ENCODE measurements at regions of chr6 and their contacts with region 1.

Region 1: GRCh38 chr6:135128268-135128914 is 52.7 kb upstream of the MYB start:
- DNase-seq: peak in 8 of 9 donors; percentile 53 to 73 (median 66)
- ATAC-seq: peak; percentile 92
- H3K4me3 ChIP-seq: peak overlapping the region; percentile 36
- H3K4me3 Mint-ChIP-seq: peak overlapping the region; percentile 46 to 93 (median 77)
- H3K27ac ChIP-seq: peak overlapping the region; percentile 75
- H3K27ac Mint-ChIP-seq: peak overlapping the region; percentile 95 to 98 (median 97)
- H3K4me1 ChIP-seq: peaks cover 18 to 22% of the 10 kb centered on the region in 2 donors
- H3K4me1 Mint-ChIP-seq: peaks cover 26 to 64% (median 55%) of the 10 kb centered on the region in 7 donors
- H3K27me3 ChIP-seq: no peaks in the 10 kb centered on the region
- H3K27me3 Mint-ChIP-seq: no peaks in the 10 kb centered on the region

Region 2: DNA sequence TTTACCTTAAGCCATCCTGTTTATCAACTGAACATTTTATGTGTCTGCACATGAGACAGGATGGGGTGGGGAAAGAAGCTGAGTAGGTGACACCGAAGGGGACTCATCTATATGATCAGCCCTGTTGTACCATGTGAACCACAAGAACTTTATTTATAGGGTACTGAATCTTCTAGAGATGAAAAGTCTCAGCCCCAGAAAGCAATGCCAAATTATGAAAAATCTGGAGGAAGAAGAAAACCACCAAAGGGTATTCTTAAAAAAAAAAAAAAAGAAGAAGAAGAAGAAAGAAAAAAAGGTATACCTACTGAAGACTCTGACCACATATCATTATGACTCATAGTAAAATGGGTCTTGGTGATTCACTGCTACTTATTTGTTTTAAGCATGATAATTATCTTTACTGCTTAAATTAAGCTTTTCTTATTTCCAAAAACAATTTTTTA is 34.0 kb before region 1 on chr6:
- CTCF ChIA-PET with region 1: interaction called, 5 read pairs
- POLR2A ChIA-PET with region 1: interaction called, 6 read pairs
- intact Hi-C with region 1: loop called in 1 of 2 experiments (anchors 2 kb)
- DNase-seq: peak in 6 of 9 donors; percentile 57 to 75 (median 64)
- ATAC-seq: peak; percentile 88
- H3K4me3 ChIP-seq: no peak overlapping the region
- H3K4me3 Mint-ChIP-seq: peak overlapping the region; percentile 3 to 70 (median 54)
- H3K27ac ChIP-seq: peak overlapping the region; percentile 56
- H3K27ac Mint-ChIP-seq: peak overlapping the region; percentile 80 to 98 (median 90)
- H3K4me1 ChIP-seq: peaks cover 17 to 41% of the 10 kb centered on the region in 2 donors
- H3K4me1 Mint-ChIP-seq: peaks cover 19 to 95% (median 79%) of the 10 kb centered on the region in 7 donors
- H3K27me3 ChIP-seq: no peaks in the 10 kb centered on the region
- H3K27me3 Mint-ChIP-seq: no peaks in the 10 kb centered on the region

Measured in naive thymus-derived CD4-positive, alpha-beta T cell (primary cell).